Mammary epithelial cell (primary cell): ENCODE measurements at regions of chr14 and their contacts with region 1.

Region 1: GRCh38 chr14:102591889-102592763 is at the start of gene RCOR1:
- DNase-seq: peak; percentile 96
- H3K4me3 ChIP-seq: peak within 1 kb of the TSS; percentile 87 to 99 (median 92)
- H3K27ac ChIP-seq: peak within 1 kb of the TSS; percentile 92
- H3K4me1 ChIP-seq: peaks cover 11% of the 10 kb centered on the region
- H3K27me3 ChIP-seq: no peaks in the 10 kb centered on the region
- CTCF ChIP-seq: no peak
- total RNA-seq, gene RCOR1: 18.7 to 45.6 TPM

Region 2: GRCh38 chr14:102437997-102438915 is 153.9 kb before region 1 on chr14:
- CTCF ChIA-PET with region 1: no interaction called
- dilution Hi-C with region 1: no loop called
- in situ Hi-C with region 1: no loop called
- intact Hi-C with region 1: loop called (anchors 10 kb)
- DNase-seq: peak; percentile 68
- H3K4me3 ChIP-seq: peak overlapping the region; percentile 16 to 30 (median 20)
- H3K27ac ChIP-seq: no peak overlapping the region
- H3K4me1 ChIP-seq: peaks cover 18% of the 10 kb centered on the region
- H3K27me3 ChIP-seq: no peaks in the 10 kb centered on the region
- CTCF ChIP-seq: peak; percentile 55 to 79

Region 3: GRCh38 chr14:102532204-102532658 is 59.9 kb before region 1 on chr14:
- CTCF ChIA-PET with region 1: interaction called, 15 read pairs
- dilution Hi-C with region 1: no loop called
- in situ Hi-C with region 1: no loop called
- intact Hi-C with region 1: no loop called
- DNase-seq: peak; percentile 83
- H3K4me3 ChIP-seq: no peak overlapping the region
- H3K27ac ChIP-seq: no peak overlapping the region
- H3K4me1 ChIP-seq: peaks cover 14% of the 10 kb centered on the region
- H3K27me3 ChIP-seq: no peaks in the 10 kb centered on the region
- CTCF ChIP-seq: no peak

Region 4: DNA sequence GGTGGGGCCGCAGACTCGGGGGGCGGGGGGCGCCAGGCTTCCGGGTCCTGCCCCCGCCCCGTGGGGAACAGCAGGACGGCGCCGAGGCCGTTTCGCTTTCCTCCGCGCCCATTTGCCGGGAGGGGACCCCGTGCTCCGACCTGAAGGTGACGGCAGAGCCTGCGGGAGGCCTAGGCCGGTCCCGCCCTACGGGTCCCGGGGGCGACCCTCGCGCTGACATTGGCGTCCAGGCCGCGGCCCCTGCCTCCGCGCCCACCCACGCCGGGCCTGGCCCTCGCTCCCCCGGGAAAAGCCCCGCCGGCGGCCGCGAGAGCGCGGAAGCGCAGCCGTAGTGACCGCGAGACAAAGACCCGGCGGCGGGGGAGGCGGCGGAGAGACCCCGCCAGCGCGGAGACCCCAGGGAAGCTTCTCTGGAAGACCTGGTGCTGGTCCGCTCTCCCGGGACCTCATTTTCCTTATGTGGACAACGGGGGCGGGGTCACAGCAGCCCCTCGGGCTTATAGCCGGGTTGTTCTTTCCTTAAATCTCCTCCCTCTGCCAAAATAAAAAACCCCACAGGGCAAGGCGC is 36.8 kb before region 1 on chr14:
- CTCF ChIA-PET with region 1: no interaction called
- dilution Hi-C with region 1: no loop called
- in situ Hi-C with region 1: no loop called
- intact Hi-C with region 1: loop called (anchors 5 kb)
- DNase-seq: no peak
- H3K4me3 ChIP-seq: peak overlapping the region; percentile 20 to 49 (median 47)
- H3K27ac ChIP-seq: no peak overlapping the region
- H3K4me1 ChIP-seq: peaks cover 38% of the 10 kb centered on the region
- H3K27me3 ChIP-seq: no peaks in the 10 kb centered on the region
- CTCF ChIP-seq: no peak

Region 5: DNA sequence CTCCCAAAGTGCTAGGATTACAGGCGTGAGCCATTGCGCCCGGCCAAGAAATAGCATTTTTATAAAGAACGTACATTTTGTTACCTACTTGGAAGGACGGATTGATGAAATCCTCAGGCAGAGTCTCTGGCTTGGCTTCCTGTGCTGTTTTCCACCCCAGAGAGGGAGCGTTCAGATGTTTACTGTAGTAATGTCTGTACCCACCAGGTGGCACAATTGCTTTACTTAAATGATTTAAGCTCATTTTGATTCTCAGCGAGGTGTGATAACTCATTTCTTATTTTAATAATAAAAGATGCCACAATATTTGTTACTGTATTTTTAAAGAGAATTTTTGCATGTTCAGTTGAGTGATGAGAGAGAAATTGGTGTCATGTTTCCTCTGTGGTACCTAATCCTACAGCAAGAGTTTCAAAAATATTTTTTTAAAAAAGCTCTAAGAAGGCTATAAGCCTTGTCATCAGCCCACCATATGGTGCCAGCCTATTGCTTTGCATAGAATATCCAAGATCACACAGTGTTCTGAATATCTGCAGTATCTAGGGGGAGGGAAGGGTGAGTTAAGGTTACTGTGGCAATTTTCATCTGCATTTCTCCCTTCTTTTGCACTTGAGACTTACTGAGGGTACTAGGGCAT is 102.5 kb after region 1 on chr14:
- CTCF ChIA-PET with region 1: interaction called, 7 read pairs
- dilution Hi-C with region 1: no loop called
- in situ Hi-C with region 1: no loop called
- intact Hi-C with region 1: loop called (anchors 5 kb)
- DNase-seq: peak; percentile 54
- H3K4me3 ChIP-seq: no peak overlapping the region
- H3K27ac ChIP-seq: no peak overlapping the region
- H3K4me1 ChIP-seq: peaks cover 7% of the 10 kb centered on the region
- H3K27me3 ChIP-seq: no peaks in the 10 kb centered on the region
- CTCF ChIP-seq: peak; percentile 52 to 55